ENCODE measurements at regions of chr3 and their contacts with region 1.

Region 1: GRCh38 chr3:81743096-81744025 is 18.1 kb downstream of the GBE1 start:
- DNase-seq: peak; percentile 62
- ATAC-seq: peak; percentile 76
- H3K4me3 ChIP-seq: peak overlapping the region in 1 of 2 experiments; percentile 30; a peak in 2 of 4 replicates
- H3K27ac ChIP-seq: peak overlapping the region; percentile 48; the same call in 1 of the 2 replicates
- H3K4me1 ChIP-seq: peaks cover 17 to 43% of the 10 kb centered on the region in 2 experiments
- H3K27me3 ChIP-seq: no peaks in the 10 kb centered on the region
- CTCF ChIP-seq: no peak
- POLR2A ChIP-seq: no peak
- RAD21 ChIP-seq: no peak

Region 2: GRCh38 chr3:81760924-81761903 is 17.9 kb after region 1 on chr3 and contains the start of gene GBE1:
- CTCF ChIA-PET with region 1: no interaction called
- POLR2A ChIA-PET with region 1: interaction called, 6 read pairs
- RAD21 ChIA-PET with region 1: no interaction called
- intact Hi-C with region 1: loop called (anchors 2 kb)
- DNase-seq: peak; percentile 71
- ATAC-seq: peak; percentile 90
- H3K4me3 ChIP-seq: peak within 1 kb of the TSS; percentile 64 to 68
- H3K27ac ChIP-seq: peak within 1 kb of the TSS; percentile 96
- H3K4me1 ChIP-seq: peaks cover 13 to 20% of the 10 kb centered on the region in 2 experiments
- H3K27me3 ChIP-seq: no peaks in the 10 kb centered on the region
- CTCF ChIP-seq: peak in 2 of 3 experiments; percentile 8 to 36; a peak in 2 of 6 replicates
- POLR2A ChIP-seq: peak; percentile 84
- RAD21 ChIP-seq: no peak
- total RNA-seq, gene GBE1: 27.7 TPM

Measured in HCT116 (cell line).